Mammary epithelial cell (primary cell): ENCODE measurements at regions of chr13 and their contacts with region 1.

Region 1: GRCh38 chr13:45047394-45048310 is 58.3 kb downstream of the GPALPP1 start:
- DNase-seq: peak; percentile 77
- H3K4me3 ChIP-seq: peak overlapping the region; percentile 48 to 59 (median 52)
- H3K27ac ChIP-seq: peak overlapping the region; percentile 16
- H3K4me1 ChIP-seq: peaks cover 9% of the 10 kb centered on the region
- H3K27me3 ChIP-seq: no peaks in the 10 kb centered on the region
- CTCF ChIP-seq: peak; percentile 92 to 94

Region 2: DNA sequence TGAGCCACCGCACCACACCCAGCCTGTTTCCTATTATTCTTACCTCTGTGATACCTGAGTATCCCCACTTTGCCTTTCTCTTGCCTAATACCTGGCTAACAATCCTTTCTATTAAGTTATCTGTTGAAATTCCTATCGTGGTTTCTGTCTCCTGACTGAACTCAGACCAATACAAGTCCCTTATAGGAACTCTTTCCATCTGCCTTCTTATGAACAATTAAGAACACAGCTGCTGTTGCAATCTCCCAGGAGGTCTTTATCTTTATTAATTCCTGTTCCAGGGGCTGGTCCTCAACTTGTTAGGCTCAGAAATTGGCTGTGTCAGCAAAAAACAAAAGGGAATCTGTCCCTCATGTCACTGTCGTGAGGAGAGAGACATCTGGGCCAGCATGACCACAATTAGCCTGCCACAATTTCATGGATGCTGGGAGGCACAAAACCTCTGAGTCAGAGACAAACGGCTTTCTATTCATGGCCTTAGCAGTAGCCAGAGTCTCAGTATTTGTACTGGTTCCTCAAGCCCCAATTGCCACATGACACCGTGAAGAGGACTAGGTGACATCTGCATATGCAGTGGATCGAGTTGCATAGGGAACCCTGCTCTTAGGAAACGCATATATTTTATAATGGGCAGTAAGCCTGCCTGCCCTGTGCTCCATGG is 116.6 kb before region 1 on chr13:
- CTCF ChIA-PET with region 1: no interaction called
- dilution Hi-C with region 1: no loop called
- in situ Hi-C with region 1: loop called in 1 of 2 experiments (anchors 25 kb)
- intact Hi-C with region 1: no loop called
- DNase-seq: peak; percentile 61
- H3K4me3 ChIP-seq: no peak overlapping the region
- H3K27ac ChIP-seq: peak overlapping the region; percentile 17
- H3K4me1 ChIP-seq: peaks cover 7% of the 10 kb centered on the region
- H3K27me3 ChIP-seq: no peaks in the 10 kb centered on the region
- CTCF ChIP-seq: no peak

Region 3: GRCh38 chr13:44961997-44962396 is 85.7 kb before region 1 on chr13:
- CTCF ChIA-PET with region 1: no interaction called
- dilution Hi-C with region 1: no loop called
- in situ Hi-C with region 1: no loop called
- intact Hi-C with region 1: no loop called
- DNase-seq: no peak
- H3K4me3 ChIP-seq: no peak overlapping the region
- H3K27ac ChIP-seq: no peak overlapping the region
- H3K4me1 ChIP-seq: no peaks in the 10 kb centered on the region
- H3K27me3 ChIP-seq: no peaks in the 10 kb centered on the region
- CTCF ChIP-seq: no peak

Region 4: DNA sequence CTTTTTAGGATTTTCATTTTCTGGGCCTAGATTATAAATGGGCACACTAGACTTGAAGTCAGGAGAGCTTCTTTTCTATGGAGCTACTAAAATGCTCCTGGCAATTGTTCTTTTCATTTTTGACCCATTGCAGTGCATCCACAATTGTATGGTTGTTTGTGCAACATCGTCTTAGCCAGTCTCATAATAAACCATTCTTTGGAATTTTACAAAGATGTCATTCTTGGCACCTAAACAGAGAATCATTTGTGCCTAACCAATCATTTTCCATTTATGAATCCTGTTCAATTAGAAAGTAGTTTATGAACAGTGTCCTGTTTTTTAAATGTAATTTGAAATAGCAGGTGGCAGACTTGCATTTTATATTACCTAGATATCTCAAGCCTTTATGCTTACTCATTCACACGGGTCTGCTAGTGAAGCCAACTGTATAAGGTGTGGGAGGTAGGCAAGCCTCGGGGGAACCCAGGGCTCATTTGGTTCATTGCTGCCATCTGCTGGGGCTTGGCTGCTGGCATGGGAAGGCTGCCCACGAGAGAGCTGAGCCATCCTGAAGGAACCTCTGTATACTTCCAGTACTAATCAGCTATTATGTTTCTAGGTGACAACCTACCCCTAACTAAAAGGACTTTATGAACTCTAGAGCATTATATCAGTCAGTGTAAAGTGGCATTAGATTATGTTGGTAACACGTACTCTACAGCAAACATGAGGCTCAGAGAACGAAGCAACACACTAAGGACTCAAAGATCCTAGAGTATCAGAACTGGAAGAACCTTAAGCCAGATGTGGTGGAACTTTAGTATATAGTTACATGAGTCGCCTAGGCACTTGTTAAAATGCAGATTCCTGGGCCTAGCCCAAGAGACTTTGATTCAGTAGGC is 233.3 kb after region 1 on chr13:
- CTCF ChIA-PET with region 1: interaction called, 7 read pairs
- dilution Hi-C with region 1: no loop called
- in situ Hi-C with region 1: no loop called
- intact Hi-C with region 1: loop called (anchors 1 kb)
- DNase-seq: peak; percentile 84
- H3K4me3 ChIP-seq: no peak overlapping the region
- H3K27ac ChIP-seq: peak overlapping the region; percentile 27
- H3K4me1 ChIP-seq: peaks cover 20% of the 10 kb centered on the region
- H3K27me3 ChIP-seq: no peaks in the 10 kb centered on the region
- CTCF ChIP-seq: peak; percentile 95 to 96

Region 5: DNA sequence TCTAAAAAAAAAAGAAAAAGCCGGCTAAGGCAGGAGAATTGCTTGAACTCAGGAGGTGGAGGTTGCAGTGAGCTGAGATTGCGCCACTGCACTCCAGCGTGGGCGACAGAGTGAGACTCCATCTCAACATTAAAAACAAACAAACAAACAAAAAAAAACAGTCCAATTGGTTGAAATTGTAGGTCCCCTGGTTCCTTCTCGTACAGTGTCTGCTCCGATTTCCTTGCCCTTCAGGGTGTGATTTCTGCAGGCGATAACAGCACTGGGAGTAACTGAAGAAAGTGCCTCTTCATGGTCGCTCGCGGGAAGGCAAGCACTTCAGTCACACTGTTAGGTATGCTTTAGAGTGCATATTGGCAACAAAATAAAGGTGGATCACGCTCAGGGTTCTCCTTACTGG is 253.6 kb after region 1 on chr13:
- CTCF ChIA-PET with region 1: no interaction called
- dilution Hi-C with region 1: loop called (anchors 5 kb)
- in situ Hi-C with region 1: loop called (anchors 5 to 10 kb)
- intact Hi-C with region 1: no loop called
- DNase-seq: no peak
- H3K4me3 ChIP-seq: no peak overlapping the region
- H3K27ac ChIP-seq: no peak overlapping the region
- H3K4me1 ChIP-seq: no peaks in the 10 kb centered on the region
- H3K27me3 ChIP-seq: no peaks in the 10 kb centered on the region
- CTCF ChIP-seq: no peak